ENCODE measurements at regions of chr3 and their contacts with region 1.

Region 1: DNA sequence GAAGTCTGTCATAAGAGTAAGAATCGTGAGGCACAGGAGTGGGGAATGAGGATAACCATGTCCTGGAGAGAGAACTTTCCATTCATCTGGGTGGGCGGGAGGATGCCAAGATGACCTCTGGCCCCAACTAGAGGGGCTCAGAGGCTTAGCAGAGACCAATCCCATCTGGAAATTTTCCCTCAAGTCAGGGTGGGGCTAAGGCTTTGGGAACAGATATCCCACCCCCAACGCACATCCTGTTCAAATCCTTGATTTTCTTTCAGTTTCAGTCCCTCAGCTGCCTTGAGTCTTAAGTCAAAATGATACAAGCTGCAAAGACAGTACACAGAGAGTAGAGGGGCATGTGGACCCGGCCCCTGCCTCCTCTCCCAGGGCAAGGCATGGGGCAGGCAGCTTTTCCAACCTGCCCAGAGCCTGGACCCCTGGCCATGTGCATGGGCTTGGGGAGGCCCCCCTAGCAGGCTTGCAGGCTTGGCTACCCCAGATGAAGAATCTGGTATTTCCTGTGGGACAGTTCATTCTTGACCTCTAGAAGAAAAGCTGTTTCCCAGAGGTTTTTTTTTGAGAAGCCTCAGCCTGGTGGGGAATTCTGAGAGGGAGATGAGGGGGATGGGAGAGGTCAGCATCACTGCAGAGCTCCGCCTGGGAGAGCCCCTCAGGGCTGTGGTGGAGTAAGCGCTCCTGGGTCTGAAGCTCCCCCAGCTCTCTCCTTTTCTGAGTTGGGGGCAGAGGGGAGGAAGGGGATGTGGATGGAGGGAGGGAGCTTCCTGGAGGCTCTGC is 109.7 kb upstream of the HACD2 start:
- DNase-seq: no peak
- ATAC-seq: no peak
- H3K4me3 ChIP-seq: no peak overlapping the region
- H3K27ac ChIP-seq: no peak overlapping the region
- H3K4me1 ChIP-seq: peaks cover 38% of the 10 kb centered on the region
- H3K27me3 ChIP-seq: no peaks in the 10 kb centered on the region
- CTCF ChIP-seq: no peak
- EP300 ChIP-seq: no peak
- POLR2A ChIP-seq: no peak
- RAD21 ChIP-seq: no peak

Region 2: GRCh38 chr3:123658118-123658851 is 36.3 kb before region 1 on chr3:
- CTCF ChIA-PET with region 1: no interaction called
- POLR2A ChIA-PET with region 1: interaction called, 3 read pairs
- in situ Hi-C with region 1: loop called (anchors 5 kb)
- intact Hi-C with region 1: loop called (anchors 2 kb)
- DNase-seq: no peak
- ATAC-seq: no peak
- H3K4me3 ChIP-seq: no peak overlapping the region
- H3K27ac ChIP-seq: no peak overlapping the region
- H3K4me1 ChIP-seq: peaks cover 13% of the 10 kb centered on the region
- H3K27me3 ChIP-seq: no peaks in the 10 kb centered on the region
- CTCF ChIP-seq: no peak
- EP300 ChIP-seq: no peak
- POLR2A ChIP-seq: no peak
- RAD21 ChIP-seq: no peak